ENCODE measurements at regions of chr3 and their contacts with region 1.

Region 1: GRCh38 chr3:10738688-10739372 is 77.2 kb upstream of the SLC6A11 start:
- DNase-seq: peak in 1 of 2 donors; percentile 73
- H3K4me3 ChIP-seq: peak overlapping the region in 1 of 2 donors; percentile 54
- H3K27ac ChIP-seq: no peak overlapping the region
- H3K4me1 ChIP-seq: peaks cover 3% of the 10 kb centered on the region in 2 donors
- H3K27me3 ChIP-seq: no peaks in the 10 kb centered on the region
- CTCF ChIP-seq: peak; percentile 66 to 75 (median 73)

Region 2: GRCh38 chr3:9503283-9503682 is 1235.5 kb before region 1 on chr3:
- intact Hi-C with region 1: loop called (anchors 5 kb)
- DNase-seq: peak in 1 of 2 donors; percentile 72
- H3K4me3 ChIP-seq: no peak overlapping the region
- H3K27ac ChIP-seq: no peak overlapping the region
- H3K4me1 ChIP-seq: peaks cover 0 to 4% of the 10 kb centered on the region in 2 donors
- H3K27me3 ChIP-seq: no peaks in the 10 kb centered on the region
- CTCF ChIP-seq: peak; percentile 28 to 73 (median 63)

Region 3: DNA sequence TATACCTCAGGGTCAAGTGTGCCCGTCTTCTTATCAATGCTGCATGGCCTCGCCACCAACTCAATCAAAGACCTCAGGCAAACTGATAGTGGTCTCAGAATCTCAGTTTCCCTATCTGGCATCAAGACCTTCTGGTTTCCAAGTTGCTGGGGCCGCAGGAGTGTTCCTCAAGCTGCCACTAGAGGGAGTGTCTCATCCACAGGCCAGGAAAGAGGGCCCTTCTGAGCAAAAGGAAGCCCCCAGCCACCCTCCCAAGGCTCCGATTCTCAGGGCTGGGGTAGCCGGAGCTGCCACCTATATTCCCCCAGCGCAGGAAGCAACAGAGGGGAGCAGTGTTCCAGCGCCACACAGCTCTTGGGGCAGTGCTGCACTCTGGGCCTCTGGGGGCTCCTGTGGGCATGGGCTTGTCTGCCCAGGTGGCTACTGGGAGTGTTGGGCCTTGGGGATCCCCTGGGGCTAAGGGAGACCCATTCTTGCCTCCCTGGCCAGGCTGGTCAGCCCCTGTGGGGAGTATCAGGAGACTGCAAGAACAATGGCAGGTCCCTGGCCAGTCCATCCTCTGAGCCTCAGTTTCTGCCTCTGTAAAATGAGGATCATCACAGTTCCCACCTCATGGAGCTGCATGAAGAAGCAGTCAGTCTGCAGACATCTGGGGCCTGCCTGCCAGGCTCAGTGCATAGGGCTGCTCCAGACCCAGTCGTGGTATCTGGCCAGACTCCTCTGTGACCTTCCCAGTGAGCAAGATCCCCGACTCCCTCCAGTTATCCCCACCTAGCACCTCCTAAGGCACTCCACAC is 394.5 kb before region 1 on chr3:
- intact Hi-C with region 1: loop called (anchors 2 kb)
- DNase-seq: no peak
- H3K4me3 ChIP-seq: no peak overlapping the region
- H3K27ac ChIP-seq: no peak overlapping the region
- H3K4me1 ChIP-seq: no peaks in the 10 kb centered on the region
- H3K27me3 ChIP-seq: no peaks in the 10 kb centered on the region
- CTCF ChIP-seq: peak; percentile 46 to 84 (median 83)

Region 4: DNA sequence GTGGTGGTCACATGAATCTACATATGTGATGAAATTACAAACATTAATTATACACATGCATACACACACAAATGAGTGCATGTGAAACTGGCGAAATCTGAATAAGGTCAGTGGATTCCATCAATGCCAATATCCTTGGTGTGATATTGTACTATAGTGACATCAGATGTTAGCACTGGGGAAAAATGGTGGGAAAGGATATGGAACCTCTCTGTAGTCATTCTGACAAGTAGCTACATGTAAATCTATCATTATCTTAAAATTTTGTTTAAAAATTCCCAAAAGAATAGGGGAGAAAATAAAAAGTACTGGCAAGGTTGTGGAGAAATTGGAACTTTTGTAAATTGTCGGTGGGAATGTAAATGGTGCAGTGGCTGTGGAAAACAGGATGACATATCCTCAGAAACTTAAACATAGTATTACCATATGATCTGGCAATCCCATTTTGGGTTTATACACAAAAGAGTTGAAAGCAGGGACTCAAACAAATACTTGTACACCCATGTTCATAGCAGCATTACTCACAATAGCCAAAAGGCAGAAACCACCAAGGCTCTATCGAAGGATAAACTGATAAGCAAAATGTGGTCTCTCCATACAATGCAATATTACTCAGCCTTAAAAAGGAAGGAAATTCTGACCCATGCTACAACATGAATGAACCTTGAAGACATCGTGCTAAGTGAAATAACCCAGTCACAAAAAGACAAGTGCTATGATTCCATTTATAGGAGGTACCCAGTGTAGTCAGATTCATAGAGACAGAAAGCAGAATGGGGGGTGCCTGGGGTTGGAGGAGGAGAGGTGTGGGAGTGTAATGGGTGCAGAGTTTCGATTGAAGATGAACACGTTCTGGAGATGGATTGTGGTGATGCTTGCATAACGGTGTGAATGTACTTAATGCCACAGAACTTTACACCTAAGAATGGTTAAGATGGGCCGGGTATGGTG is 390.1 kb after region 1 on chr3:
- intact Hi-C with region 1: no loop called
- DNase-seq: no peak
- H3K4me3 ChIP-seq: no peak overlapping the region
- H3K27ac ChIP-seq: no peak overlapping the region
- H3K4me1 ChIP-seq: no peaks in the 10 kb centered on the region
- H3K27me3 ChIP-seq: no peaks in the 10 kb centered on the region
- CTCF ChIP-seq: no peak